ENCODE measurements at regions of chr18 and their contacts with region 1.

Region 1: DNA sequence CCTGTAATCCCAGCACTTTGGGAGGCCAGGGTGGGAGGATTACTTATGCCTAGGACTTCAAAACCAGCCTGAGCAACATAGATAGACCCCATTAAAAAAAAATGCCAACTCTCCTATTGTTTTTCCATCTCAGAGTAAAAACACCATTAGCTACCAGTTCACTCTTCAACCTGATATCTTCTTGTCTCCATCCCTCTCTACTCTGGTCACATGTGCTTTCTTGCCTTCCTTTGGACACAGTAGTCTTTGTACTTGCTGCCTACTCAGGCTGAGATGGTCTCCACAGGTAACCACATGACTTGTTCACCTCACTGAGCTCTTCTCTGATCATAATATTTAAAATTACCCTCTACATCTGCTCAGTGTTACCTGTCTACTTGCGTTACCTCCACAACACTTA is 5.0 kb downstream of the MALT1 start:
- DNase-seq: no peak
- ATAC-seq: no peak
- H3K4me3 Mint-ChIP-seq: no peak overlapping the region
- H3K27ac Mint-ChIP-seq: peak overlapping the region; percentile 4
- H3K4me1 Mint-ChIP-seq: peaks cover 74% of the 10 kb centered on the region
- H3K27me3 Mint-ChIP-seq: no peaks in the 10 kb centered on the region
- CTCF ChIP-seq: no peak

Region 2: DNA sequence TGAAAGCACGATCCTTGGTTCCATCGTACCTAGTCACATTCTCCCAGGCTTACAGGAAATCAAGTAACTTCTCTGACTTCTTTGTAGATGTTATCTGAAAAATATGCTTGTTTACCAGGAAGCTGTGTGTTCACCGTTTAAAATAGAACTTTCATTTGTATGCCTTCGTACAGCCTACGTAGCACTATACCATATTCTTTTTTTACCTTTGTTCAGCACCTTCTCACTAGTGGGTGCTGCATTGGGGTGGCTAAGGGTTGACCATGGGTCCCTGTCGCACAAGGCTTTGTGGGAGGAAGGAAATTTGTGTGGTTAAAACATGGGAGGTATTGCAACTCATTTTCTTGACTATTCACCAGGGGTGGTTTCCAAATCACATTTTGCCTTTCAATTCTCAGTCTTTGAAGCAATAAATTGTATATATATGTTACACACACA is 11.6 kb after region 1 on chr18:
- CTCF ChIA-PET with region 1: interaction called, 5 read pairs
- POLR2A ChIA-PET with region 1: interaction called, 12 read pairs
- intact Hi-C with region 1: loop called (anchors 2 kb)
- DNase-seq: no peak
- ATAC-seq: peak; percentile 42
- H3K4me3 Mint-ChIP-seq: peak overlapping the region; percentile 50
- H3K27ac Mint-ChIP-seq: peak overlapping the region; percentile 75
- H3K4me1 Mint-ChIP-seq: peaks cover 34% of the 10 kb centered on the region
- H3K27me3 Mint-ChIP-seq: no peaks in the 10 kb centered on the region
- CTCF ChIP-seq: no peak

Region 3: GRCh38 chr18:58928386-58928785 is 252.1 kb after region 1 on chr18:
- CTCF ChIA-PET with region 1: no interaction called
- POLR2A ChIA-PET with region 1: no interaction called
- intact Hi-C with region 1: no loop called
- DNase-seq: no peak
- ATAC-seq: no peak
- H3K4me3 Mint-ChIP-seq: no peak overlapping the region
- H3K27ac Mint-ChIP-seq: no peak overlapping the region
- H3K4me1 Mint-ChIP-seq: peaks cover 30% of the 10 kb centered on the region
- H3K27me3 Mint-ChIP-seq: no peaks in the 10 kb centered on the region
- CTCF ChIP-seq: no peak

Measured in activated B cell treated with CpG ODN at 0.5 μM for 24 hours (primary cell).